ENCODE measurements at regions of chr13 and their contacts with region 1.

Region 1: GRCh38 chr13:48731957-48732569 is 78.3 kb downstream of the CYSLTR2 start:
- DNase-seq: peak; percentile 15 to 83
- H3K4me3 ChIP-seq: no peak overlapping the region
- H3K27ac ChIP-seq: no peak overlapping the region
- H3K4me1 ChIP-seq: peaks cover 0 to 5% (median 2%) of the 10 kb centered on the region in 4 experiments; a peak in 3 of 7 replicates
- H3K27me3 ChIP-seq: no peaks in the 10 kb centered on the region
- CTCF ChIP-seq: peak; percentile 88 to 97 (median 93)
- EP300 ChIP-seq: no peak
- POLR2A ChIP-seq: no peak
- RAD21 ChIP-seq: peak; percentile 74 to 87

Region 2: GRCh38 chr13:48595431-48596429 is 136.3 kb before region 1 on chr13:
- CTCF ChIA-PET with region 1: interaction called, 19 read pairs
- POLR2A ChIA-PET with region 1: no interaction called
- DNase-seq: peak in 1 of 2 experiments; percentile 50
- H3K4me3 ChIP-seq: no peak overlapping the region
- H3K27ac ChIP-seq: no peak overlapping the region
- H3K4me1 ChIP-seq: peaks cover 8 to 25% (median 18%) of the 10 kb centered on the region in 4 experiments
- H3K27me3 ChIP-seq: no peaks in the 10 kb centered on the region
- CTCF ChIP-seq: peak; percentile 31 to 95 (median 57)
- EP300 ChIP-seq: no peak
- POLR2A ChIP-seq: no peak
- RAD21 ChIP-seq: peak; percentile 89 to 91

Region 3: GRCh38 chr13:48624858-48625257 is 107.2 kb before region 1 on chr13:
- CTCF ChIA-PET with region 1: no interaction called
- POLR2A ChIA-PET with region 1: no interaction called
- DNase-seq: no peak
- H3K4me3 ChIP-seq: no peak overlapping the region
- H3K27ac ChIP-seq: no peak overlapping the region
- H3K4me1 ChIP-seq: no peaks in the 10 kb centered on the region
- H3K27me3 ChIP-seq: no peaks in the 10 kb centered on the region
- CTCF ChIP-seq: no peak
- EP300 ChIP-seq: no peak
- POLR2A ChIP-seq: no peak
- RAD21 ChIP-seq: no peak

Region 4: GRCh38 chr13:48695776-48696175 is 36.3 kb before region 1 on chr13:
- CTCF ChIA-PET with region 1: no interaction called
- POLR2A ChIA-PET with region 1: no interaction called
- DNase-seq: no peak
- H3K4me3 ChIP-seq: no peak overlapping the region
- H3K27ac ChIP-seq: no peak overlapping the region
- H3K4me1 ChIP-seq: no peaks in the 10 kb centered on the region
- H3K27me3 ChIP-seq: no peaks in the 10 kb centered on the region
- CTCF ChIP-seq: no peak
- EP300 ChIP-seq: no peak
- POLR2A ChIP-seq: no peak
- RAD21 ChIP-seq: no peak

Region 5: GRCh38 chr13:48720621-48721020 is 11.4 kb before region 1 on chr13:
- CTCF ChIA-PET with region 1: interaction called, 44 read pairs
- POLR2A ChIA-PET with region 1: interaction called, 4 read pairs
- DNase-seq: no peak
- H3K4me3 ChIP-seq: no peak overlapping the region
- H3K27ac ChIP-seq: no peak overlapping the region
- H3K4me1 ChIP-seq: no peaks in the 10 kb centered on the region
- H3K27me3 ChIP-seq: no peaks in the 10 kb centered on the region
- CTCF ChIP-seq: no peak
- EP300 ChIP-seq: no peak
- POLR2A ChIP-seq: no peak
- RAD21 ChIP-seq: no peak

Region 6: DNA sequence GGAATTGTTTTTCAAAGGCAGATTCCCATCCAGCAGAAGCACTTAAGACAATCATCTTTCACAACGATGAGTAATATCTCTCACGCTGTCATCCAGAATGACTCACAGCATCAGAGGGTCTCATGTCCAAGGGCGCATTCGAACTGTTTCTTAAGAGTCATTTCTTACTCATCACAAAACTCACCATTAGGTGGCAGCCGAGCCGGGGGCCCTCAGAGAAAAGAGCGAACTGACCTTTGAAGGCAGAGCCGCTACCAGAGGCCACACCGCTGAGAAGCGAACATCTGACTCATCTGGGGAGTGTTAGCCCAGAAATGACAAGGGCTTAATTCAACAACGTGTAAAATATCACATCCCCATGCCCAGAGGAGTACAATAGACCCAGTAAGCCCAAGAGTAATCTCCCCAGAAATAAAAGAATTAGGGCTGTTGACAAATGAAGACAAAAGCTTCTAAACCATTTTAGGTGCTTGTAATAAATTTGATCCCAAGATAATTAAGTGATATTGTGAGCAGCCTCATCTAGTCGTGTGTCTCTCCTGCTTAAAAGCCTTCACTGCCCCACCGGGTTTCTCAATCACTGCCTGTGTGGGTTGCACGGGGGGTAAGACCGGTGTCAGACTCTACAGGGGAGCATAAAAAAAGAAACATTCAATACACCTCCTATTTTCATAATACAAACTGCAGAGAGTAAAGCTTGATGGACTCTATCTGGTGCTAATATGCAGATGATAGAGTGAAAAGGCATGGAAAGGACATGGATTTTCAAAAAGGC is 17.8 kb after region 1 on chr13:
- CTCF ChIA-PET with region 1: interaction called, 48 read pairs
- POLR2A ChIA-PET with region 1: no interaction called
- DNase-seq: peak; percentile 46 to 76
- H3K4me3 ChIP-seq: no peak overlapping the region
- H3K27ac ChIP-seq: no peak overlapping the region
- H3K4me1 ChIP-seq: no peaks in the 10 kb centered on the region
- H3K27me3 ChIP-seq: no peaks in the 10 kb centered on the region
- CTCF ChIP-seq: peak; percentile 37 to 62 (median 61)
- EP300 ChIP-seq: no peak
- POLR2A ChIP-seq: no peak
- RAD21 ChIP-seq: peak; percentile 52 to 66; a peak in 3 of 4 replicates

Measured in H1 (cell line).